Activated CD4-positive, alpha-beta memory T cell treated with anti-CD3 and anti-CD28 coated beads for 36 hours (primary cell): ENCODE measurements at regions of chr7 and their contacts with region 1.

Region 1: GRCh38 chr7:151038951-151039849 is 9.1 kb upstream of the ASIC3 start:
- DNase-seq: peak; percentile 91
- H3K4me3 Mint-ChIP-seq: no peak overlapping the region
- H3K27ac Mint-ChIP-seq: peak overlapping the region; percentile 91
- H3K4me1 Mint-ChIP-seq: peaks cover 16% of the 10 kb centered on the region
- H3K27me3 Mint-ChIP-seq: no peaks in the 10 kb centered on the region

Region 2: GRCh38 chr7:151057989-151058780 is 19.0 kb after region 1 on chr7:
- CTCF ChIA-PET with region 1: no interaction called
- POLR2A ChIA-PET with region 1: no interaction called
- intact Hi-C with region 1: loop called (anchors 1 kb)
- DNase-seq: peak; percentile 98
- H3K4me3 Mint-ChIP-seq: peak overlapping the region; percentile 89
- H3K27ac Mint-ChIP-seq: peak overlapping the region; percentile 89
- H3K4me1 Mint-ChIP-seq: peaks cover 25% of the 10 kb centered on the region
- H3K27me3 Mint-ChIP-seq: no peaks in the 10 kb centered on the region